ENCODE measurements at regions of chr17 and their contacts with region 1.

Region 1: GRCh38 chr17:35312790-35313711 is 60.4 kb downstream of the SLFN11 start:
- DNase-seq: peak; percentile 43
- ATAC-seq: peak; percentile 97
- H3K4me3 ChIP-seq: peak overlapping the region; percentile 52
- H3K27ac ChIP-seq: no peak overlapping the region
- H3K4me1 ChIP-seq: peaks cover 9% of the 10 kb centered on the region
- H3K27me3 ChIP-seq: no peaks in the 10 kb centered on the region
- CTCF ChIP-seq: peak; percentile 77 to 82 (median 78)
- EP300 ChIP-seq: no peak
- POLR2A ChIP-seq: no peak
- RAD21 ChIP-seq: peak; percentile 92

Region 2: DNA sequence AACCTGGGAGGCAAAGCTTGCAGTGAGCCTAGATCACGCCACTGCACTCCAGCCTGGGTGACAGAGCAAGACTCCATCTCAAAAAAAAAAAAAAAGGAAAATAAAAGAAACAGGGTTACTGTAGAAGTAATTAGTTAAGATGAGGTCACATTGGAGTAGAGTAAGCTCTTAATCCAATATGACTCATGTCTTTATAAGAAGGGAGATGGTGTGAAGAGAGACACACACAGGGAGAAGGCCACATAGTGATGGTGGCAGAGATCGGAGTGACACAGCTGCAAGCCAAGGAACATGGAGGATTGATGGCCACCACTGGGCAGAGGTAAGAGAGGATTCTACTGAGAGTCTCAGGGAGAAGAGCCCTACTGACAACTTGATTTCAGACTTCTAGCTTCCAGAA is 85.5 kb before region 1 on chr17:
- CTCF ChIA-PET with region 1: no interaction called
- POLR2A ChIA-PET with region 1: no interaction called
- RAD21 ChIA-PET with region 1: no interaction called
- SMC1A ChIA-PET with region 1: no interaction called
- in situ Hi-C with region 1: no loop called
- intact Hi-C with region 1: no loop called
- DNase-seq: no peak
- ATAC-seq: no peak
- H3K4me3 ChIP-seq: no peak overlapping the region
- H3K27ac ChIP-seq: no peak overlapping the region
- H3K4me1 ChIP-seq: no peaks in the 10 kb centered on the region
- H3K27me3 ChIP-seq: no peaks in the 10 kb centered on the region
- CTCF ChIP-seq: no peak
- EP300 ChIP-seq: no peak
- POLR2A ChIP-seq: no peak
- RAD21 ChIP-seq: no peak

Region 3: DNA sequence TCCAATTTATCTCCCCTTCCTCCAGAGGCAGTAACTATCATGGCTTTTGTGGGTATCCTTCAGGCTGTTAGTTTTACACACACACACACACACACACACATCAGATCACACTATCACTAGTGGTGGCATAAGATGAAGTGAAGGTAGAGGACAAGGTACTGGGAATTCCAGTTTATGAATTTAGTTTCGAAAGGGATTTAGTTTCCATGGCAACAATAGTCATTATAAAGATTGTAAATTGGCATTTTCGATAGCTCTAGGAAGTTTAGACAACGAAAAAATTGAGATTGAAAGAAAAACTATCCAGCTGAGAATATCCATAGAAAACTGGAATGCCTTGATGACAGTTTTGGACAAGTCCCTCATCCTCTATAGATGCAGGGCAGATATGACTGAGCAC is 39.4 kb before region 1 on chr17:
- CTCF ChIA-PET with region 1: no interaction called
- POLR2A ChIA-PET with region 1: no interaction called
- RAD21 ChIA-PET with region 1: no interaction called
- SMC1A ChIA-PET with region 1: no interaction called
- in situ Hi-C with region 1: no loop called
- intact Hi-C with region 1: no loop called
- DNase-seq: no peak
- ATAC-seq: no peak
- H3K4me3 ChIP-seq: no peak overlapping the region
- H3K27ac ChIP-seq: no peak overlapping the region
- H3K4me1 ChIP-seq: no peaks in the 10 kb centered on the region
- H3K27me3 ChIP-seq: no peaks in the 10 kb centered on the region
- CTCF ChIP-seq: no peak
- EP300 ChIP-seq: no peak
- POLR2A ChIP-seq: no peak
- RAD21 ChIP-seq: no peak

Region 4: GRCh38 chr17:35299129-35299528 is 13.9 kb before region 1 on chr17:
- CTCF ChIA-PET with region 1: interaction called, 12 read pairs
- POLR2A ChIA-PET with region 1: no interaction called
- RAD21 ChIA-PET with region 1: no interaction called
- SMC1A ChIA-PET with region 1: interaction called, 6 read pairs
- in situ Hi-C with region 1: no loop called
- intact Hi-C with region 1: no loop called
- DNase-seq: no peak
- ATAC-seq: no peak
- H3K4me3 ChIP-seq: no peak overlapping the region
- H3K27ac ChIP-seq: no peak overlapping the region
- H3K4me1 ChIP-seq: no peaks in the 10 kb centered on the region
- H3K27me3 ChIP-seq: peaks cover 0 to 3% of the 10 kb centered on the region in 2 experiments; a peak in 1 of 4 replicates
- CTCF ChIP-seq: no peak
- EP300 ChIP-seq: no peak
- POLR2A ChIP-seq: no peak
- RAD21 ChIP-seq: no peak

Region 5: GRCh38 chr17:35432176-35433074 is 119.4 kb after region 1 on chr17 and contains the start of gene SLFN12:
- CTCF ChIA-PET with region 1: interaction called, 15 read pairs
- POLR2A ChIA-PET with region 1: no interaction called
- RAD21 ChIA-PET with region 1: interaction called, 6 read pairs
- SMC1A ChIA-PET with region 1: interaction called, 6 read pairs
- in situ Hi-C with region 1: no loop called
- intact Hi-C with region 1: no loop called
- DNase-seq: peak; percentile 67
- ATAC-seq: peak; percentile 94
- H3K4me3 ChIP-seq: peak within 1 kb of the TSS; percentile 82
- H3K27ac ChIP-seq: peak within 1 kb of the TSS; percentile 90
- H3K4me1 ChIP-seq: peaks cover 16% of the 10 kb centered on the region
- H3K27me3 ChIP-seq: no peaks in the 10 kb centered on the region
- CTCF ChIP-seq: no peak
- EP300 ChIP-seq: no peak
- POLR2A ChIP-seq: 0 out of 2 replicates have a peak, but pooled peaks have one; percentile 28
- RAD21 ChIP-seq: no peak
- polyA plus RNA-seq, gene SLFN12: 11.2 to 14.8 TPM

Region 6: GRCh38 chr17:35486920-35487732 is 174.1 kb after region 1 on chr17:
- CTCF ChIA-PET with region 1: interaction called, 27 read pairs
- POLR2A ChIA-PET with region 1: no interaction called
- RAD21 ChIA-PET with region 1: interaction called, 29 read pairs
- SMC1A ChIA-PET with region 1: interaction called, 25 read pairs
- in situ Hi-C with region 1: no loop called
- intact Hi-C with region 1: no loop called
- DNase-seq: peak; percentile 23
- ATAC-seq: peak; percentile 88
- H3K4me3 ChIP-seq: peak overlapping the region; percentile 66
- H3K27ac ChIP-seq: peak overlapping the region; percentile 43
- H3K4me1 ChIP-seq: peaks cover 12% of the 10 kb centered on the region
- H3K27me3 ChIP-seq: no peaks in the 10 kb centered on the region
- CTCF ChIP-seq: no peak
- EP300 ChIP-seq: no peak
- POLR2A ChIP-seq: 0 out of 2 replicates have a peak, but pooled peaks have one; percentile 23
- RAD21 ChIP-seq: no peak

Measured in GM12878 (cell line).